Transverse colon (tissue), 4 donors: ENCODE measurements at regions of chr6 and their contacts with region 1.

Region 1: DNA sequence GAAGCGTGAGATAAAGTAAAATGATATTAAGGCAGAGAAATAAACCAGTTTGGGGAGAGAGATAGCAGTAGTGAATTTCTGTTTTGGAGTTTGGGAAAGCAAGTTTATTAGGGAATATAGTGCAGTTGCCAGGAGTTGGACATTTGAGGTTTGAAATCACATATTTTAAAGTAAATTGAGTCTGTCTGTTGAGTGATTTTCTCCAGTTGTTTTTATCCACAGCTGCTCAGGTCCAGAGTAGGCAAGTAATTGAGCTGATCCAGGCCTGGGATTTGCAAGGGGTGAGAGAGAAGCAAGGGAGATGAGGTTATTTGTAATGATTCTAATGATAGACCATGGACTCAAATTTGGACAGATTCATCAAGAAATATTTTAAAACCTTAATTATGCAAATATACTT is 481.9 kb downstream of the UTRN start:
- DNase-seq: no peak
- H3K4me3 ChIP-seq: no peak overlapping the region
- H3K27ac ChIP-seq: no peak overlapping the region
- H3K4me1 ChIP-seq: no peaks in the 10 kb centered on the region
- H3K27me3 ChIP-seq: no peaks in the 10 kb centered on the region
- CTCF ChIP-seq: no peak
- EP300 ChIP-seq: no peak
- POLR2A ChIP-seq: no peak

Region 2: GRCh38 chr6:143759666-143760065 is 1007.4 kb before region 1 on chr6:
- in situ Hi-C with region 1: no loop called
- intact Hi-C with region 1: no loop called
- DNase-seq: no peak
- H3K4me3 ChIP-seq: no peak overlapping the region
- H3K27ac ChIP-seq: no peak overlapping the region
- H3K4me1 ChIP-seq: peaks cover 0 to 4% (median 0%) of the 10 kb centered on the region in 4 donors
- H3K27me3 ChIP-seq: no peaks in the 10 kb centered on the region
- CTCF ChIP-seq: no peak
- EP300 ChIP-seq: no peak
- POLR2A ChIP-seq: no peak

Region 3: GRCh38 chr6:144689503-144690075 is 77.5 kb before region 1 on chr6:
- in situ Hi-C with region 1: no loop called
- intact Hi-C with region 1: loop called (anchors 2 kb)
- DNase-seq: no peak
- H3K4me3 ChIP-seq: no peak overlapping the region
- H3K27ac ChIP-seq: no peak overlapping the region
- H3K4me1 ChIP-seq: no peaks in the 10 kb centered on the region
- H3K27me3 ChIP-seq: no peaks in the 10 kb centered on the region
- CTCF ChIP-seq: no peak
- EP300 ChIP-seq: no peak
- POLR2A ChIP-seq: no peak